ENCODE measurements at regions of chr1 and their contacts with region 1.

Region 1: DNA sequence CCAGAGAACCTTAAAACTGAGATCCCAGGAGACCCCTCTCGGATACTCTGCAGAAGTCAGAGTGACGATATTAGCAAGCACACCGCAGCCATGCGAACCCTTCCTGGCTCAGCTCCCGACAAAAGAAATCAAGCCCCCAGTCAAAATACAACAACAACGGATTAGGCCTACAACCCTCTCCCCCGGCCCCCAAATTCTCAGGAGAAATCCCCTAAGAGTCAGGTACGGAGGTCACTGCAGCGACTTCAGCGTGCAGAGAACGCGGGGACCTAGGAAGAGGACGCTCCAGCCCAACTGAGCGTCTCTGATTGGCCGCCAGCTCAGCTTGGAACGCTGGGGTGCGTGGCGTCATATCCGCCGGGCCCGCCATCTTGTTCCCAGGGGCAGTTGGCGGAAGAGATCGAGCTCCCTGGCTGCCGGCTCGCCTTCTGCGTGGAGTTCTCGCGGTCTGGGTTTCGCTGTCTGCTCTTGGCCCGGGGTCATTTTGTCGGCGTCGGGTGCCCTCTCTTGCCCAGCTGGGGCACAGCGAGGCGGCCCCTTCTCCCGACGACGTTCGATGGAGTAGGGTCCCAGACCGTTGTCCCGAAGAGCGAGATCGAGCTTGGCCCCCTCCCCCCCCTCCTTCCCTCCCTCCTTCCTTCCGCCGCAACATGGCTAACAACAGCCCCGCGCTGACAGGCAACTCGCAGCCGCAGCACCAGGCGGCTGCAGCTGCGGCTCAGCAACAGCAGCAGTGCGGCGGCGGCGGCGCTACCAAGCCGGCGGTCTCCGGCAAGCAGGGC is at the start of gene PRPF38B:
- DNase-seq: peak; percentile 91
- ATAC-seq: peak; percentile 89
- H3K4me3 Mint-ChIP-seq: peak within 1 kb of the TSS; percentile 99
- H3K27ac Mint-ChIP-seq: peak within 1 kb of the TSS; percentile 98
- H3K4me1 Mint-ChIP-seq: peaks cover 46% of the 10 kb centered on the region
- H3K27me3 Mint-ChIP-seq: no peaks in the 10 kb centered on the region
- CTCF ChIP-seq: no peak
- total RNA-seq, gene PRPF38B: 77.3 and 88.1 TPM in 2 replicates

Region 2: DNA sequence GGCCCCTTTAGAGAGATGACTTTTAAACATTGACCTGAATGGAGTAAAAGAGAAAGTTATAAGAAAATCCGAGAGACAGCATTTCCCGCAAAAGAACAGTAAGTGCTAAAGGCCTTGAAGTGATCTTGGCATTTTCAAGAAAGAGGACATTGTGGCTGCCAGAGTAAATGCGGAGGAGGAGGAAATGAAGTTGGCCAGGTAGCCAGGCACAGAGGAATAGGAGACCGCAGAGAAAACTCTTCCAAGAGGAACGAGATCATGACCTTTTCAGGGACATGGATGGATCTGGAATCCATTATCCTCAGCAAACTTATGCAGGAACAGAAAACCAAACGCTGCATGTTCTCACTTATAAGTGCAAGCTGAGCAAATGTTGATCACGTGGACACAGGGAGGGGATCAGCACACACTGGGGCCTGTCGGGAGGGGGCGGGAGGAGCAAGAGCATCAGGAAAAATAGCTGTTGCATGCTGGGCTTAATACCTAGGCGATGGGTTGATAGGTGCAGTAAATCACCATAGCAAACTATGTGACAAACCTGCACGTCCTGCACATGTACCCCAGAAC is 82.6 kb before region 1 on chr1:
- CTCF ChIA-PET with region 1: no interaction called
- POLR2A ChIA-PET with region 1: interaction called, 10 read pairs
- intact Hi-C with region 1: no loop called
- DNase-seq: no peak
- ATAC-seq: no peak
- H3K4me3 Mint-ChIP-seq: no peak overlapping the region
- H3K27ac Mint-ChIP-seq: no peak overlapping the region
- H3K4me1 Mint-ChIP-seq: no peaks in the 10 kb centered on the region
- H3K27me3 Mint-ChIP-seq: no peaks in the 10 kb centered on the region
- CTCF ChIP-seq: no peak

Region 3: DNA sequence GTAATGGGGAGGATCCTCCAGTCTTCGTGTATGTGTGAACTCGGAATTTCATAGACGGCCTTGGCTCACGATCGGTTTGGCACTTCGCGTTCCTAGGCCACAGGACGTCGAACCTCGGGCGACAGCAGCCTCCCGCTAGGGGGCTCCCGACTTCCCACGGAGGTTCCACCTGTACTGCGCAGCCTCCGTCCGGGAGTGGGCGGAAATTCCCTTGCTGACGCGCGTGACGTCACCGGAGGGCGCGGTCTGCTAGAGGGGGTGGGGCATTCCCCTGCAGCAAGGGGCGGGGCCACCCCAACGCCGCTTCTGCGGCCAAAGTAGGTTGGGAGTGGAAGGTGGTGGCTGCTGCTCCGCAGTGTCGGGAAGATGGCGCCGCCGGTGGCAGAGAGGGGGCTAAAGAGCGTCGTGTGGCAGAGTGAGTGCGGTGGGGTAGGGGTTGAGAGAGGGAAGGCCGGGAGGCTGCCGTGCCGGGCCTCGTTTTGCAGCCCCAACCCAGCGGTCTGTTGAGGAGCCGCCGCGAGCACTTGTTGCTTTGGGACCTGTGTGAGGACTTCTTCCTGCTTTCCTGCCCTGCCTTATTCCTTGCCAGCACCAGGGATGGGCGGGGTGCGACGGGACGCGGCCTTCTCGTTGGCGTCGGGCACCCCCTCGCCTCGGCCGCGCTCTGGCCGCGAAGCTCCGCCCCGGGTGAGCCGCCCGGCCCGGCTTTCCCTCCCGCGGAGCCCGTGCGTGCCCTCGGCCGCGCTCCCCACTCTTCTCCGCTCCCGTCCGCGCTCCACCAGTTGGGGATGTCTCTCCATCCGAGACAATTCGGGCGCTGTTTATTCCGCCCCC is 54.5 kb after region 1 on chr1 and contains the start of gene STXBP3:
- CTCF ChIA-PET with region 1: no interaction called
- POLR2A ChIA-PET with region 1: interaction called, 17 read pairs
- intact Hi-C with region 1: loop called (anchors 1 kb)
- DNase-seq: peak; percentile 99
- ATAC-seq: peak; percentile 92
- H3K4me3 Mint-ChIP-seq: peak within 1 kb of the TSS; percentile 99
- H3K27ac Mint-ChIP-seq: peak within 1 kb of the TSS; percentile 99
- H3K4me1 Mint-ChIP-seq: peaks cover 28% of the 10 kb centered on the region
- H3K27me3 Mint-ChIP-seq: no peaks in the 10 kb centered on the region
- CTCF ChIP-seq: peak; percentile 93
- total RNA-seq, gene STXBP3: 46.4 and 50.2 TPM in 2 replicates

Region 4: DNA sequence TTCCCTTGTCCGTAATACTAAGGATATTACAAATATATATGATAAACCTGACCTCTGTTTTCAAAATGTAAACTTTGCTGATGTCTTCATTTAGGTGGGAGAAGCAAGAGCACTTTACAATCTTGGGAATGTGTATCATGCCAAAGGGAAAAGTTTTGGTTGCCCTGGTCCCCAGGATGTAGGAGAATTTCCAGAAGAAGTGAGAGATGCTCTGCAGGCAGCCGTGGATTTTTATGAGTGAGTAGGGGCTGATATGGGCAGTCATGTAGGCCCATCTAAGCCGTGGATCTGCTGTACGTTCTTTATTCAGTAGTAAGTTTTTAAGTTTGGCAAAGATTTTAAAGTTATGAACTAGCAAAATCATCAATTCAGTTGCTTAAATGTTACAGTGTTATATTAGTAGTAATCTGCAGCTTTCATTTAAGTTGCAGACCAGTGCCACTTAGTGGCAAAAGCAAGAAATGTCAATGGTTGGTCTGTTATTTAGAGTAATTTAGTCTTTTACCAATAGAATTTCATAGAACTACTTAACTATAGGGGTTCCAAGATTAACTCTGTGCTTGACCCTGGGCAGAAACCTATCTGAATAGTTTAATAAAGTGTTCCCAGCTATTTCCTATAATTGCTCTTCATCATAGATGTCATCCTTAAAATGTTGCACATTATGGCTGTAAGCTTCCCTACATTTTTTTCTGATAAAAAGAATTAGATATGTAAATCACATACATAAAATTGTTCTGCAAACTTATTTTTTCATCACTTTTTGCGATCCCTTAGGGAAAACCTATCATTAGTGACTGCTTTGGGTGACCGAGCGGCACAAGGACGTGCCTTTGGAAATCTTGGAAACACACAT is 206.0 kb after region 1 on chr1:
- CTCF ChIA-PET with region 1: interaction called, 6 read pairs
- POLR2A ChIA-PET with region 1: interaction called, 4 read pairs
- intact Hi-C with region 1: loop called (anchors 1 kb)
- DNase-seq: no peak
- ATAC-seq: peak; percentile 66
- H3K4me3 Mint-ChIP-seq: no peak overlapping the region
- H3K27ac Mint-ChIP-seq: no peak overlapping the region
- H3K4me1 Mint-ChIP-seq: no peaks in the 10 kb centered on the region
- H3K27me3 Mint-ChIP-seq: no peaks in the 10 kb centered on the region
- CTCF ChIP-seq: peak; percentile 36

Region 5: DNA sequence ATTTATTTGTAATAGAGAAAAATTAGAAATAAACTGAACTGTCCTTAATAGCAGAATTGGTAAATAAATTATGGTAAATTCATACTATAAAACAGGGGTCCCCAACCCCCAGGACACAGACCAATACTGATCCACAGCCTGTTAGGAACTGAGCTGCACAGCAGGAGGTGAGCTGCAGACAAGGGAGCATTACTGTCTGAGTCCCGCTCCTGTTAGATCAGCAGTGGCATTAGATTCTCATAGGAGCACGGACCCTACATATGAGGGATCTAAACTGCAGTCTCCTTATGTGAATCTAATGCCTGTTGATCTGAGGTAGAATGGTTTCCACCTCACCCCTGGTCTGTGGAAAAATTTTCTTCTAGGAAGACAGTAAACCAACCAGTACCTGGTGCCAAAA is 342.2 kb after region 1 on chr1:
- CTCF ChIA-PET with region 1: no interaction called
- POLR2A ChIA-PET with region 1: no interaction called
- intact Hi-C with region 1: no loop called
- DNase-seq: no peak
- ATAC-seq: no peak
- H3K4me3 Mint-ChIP-seq: no peak overlapping the region
- H3K27ac Mint-ChIP-seq: no peak overlapping the region
- H3K4me1 Mint-ChIP-seq: no peaks in the 10 kb centered on the region
- H3K27me3 Mint-ChIP-seq: no peaks in the 10 kb centered on the region
- CTCF ChIP-seq: no peak

Region 6: GRCh38 chr1:109075531-109076490 is 383.7 kb after region 1 on chr1 and contains the start of gene TAF13:
- CTCF ChIA-PET with region 1: no interaction called
- POLR2A ChIA-PET with region 1: interaction called, 3 read pairs
- intact Hi-C with region 1: loop called (anchors 2 kb)
- DNase-seq: peak; percentile 92
- ATAC-seq: peak; percentile 99
- H3K4me3 Mint-ChIP-seq: peak within 1 kb of the TSS; percentile 97
- H3K27ac Mint-ChIP-seq: peak within 1 kb of the TSS; percentile 96
- H3K4me1 Mint-ChIP-seq: peaks cover 25% of the 10 kb centered on the region
- H3K27me3 Mint-ChIP-seq: no peaks in the 10 kb centered on the region
- CTCF ChIP-seq: no peak
- total RNA-seq, gene TAF13: 18.5 and 21.2 TPM in 2 replicates

Region 7: DNA sequence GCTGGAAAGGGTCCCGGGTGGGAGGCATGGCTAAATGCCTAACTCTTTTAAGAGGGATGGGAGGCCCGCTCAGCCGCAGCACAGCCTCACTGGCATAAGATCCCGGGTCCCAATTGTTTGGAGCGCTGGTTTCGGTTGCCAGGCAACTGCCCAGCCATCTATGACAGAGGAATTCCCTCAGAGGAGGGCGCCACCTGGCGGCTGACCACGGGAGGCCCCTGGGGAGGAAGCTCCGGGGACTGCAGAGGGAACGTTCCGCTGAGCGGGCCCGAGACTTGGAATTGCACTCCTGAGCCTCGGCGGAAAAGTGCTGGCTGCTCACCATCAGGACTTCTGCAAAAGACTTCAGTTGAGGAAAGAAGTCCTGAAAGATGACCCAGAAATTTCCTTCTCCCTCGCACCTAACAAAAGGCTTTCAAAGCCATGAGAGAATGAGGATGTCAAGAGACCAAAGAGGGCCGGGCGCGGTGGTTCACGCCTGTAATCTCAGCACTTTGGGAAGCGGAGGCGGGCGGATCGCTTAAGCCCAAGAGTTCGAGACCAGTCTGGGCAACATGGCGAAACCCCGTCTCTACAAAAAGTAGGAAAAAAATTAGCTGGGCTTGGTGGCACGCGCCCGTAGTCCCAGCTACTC is 420.6 kb after region 1 on chr1:
- CTCF ChIA-PET with region 1: no interaction called
- POLR2A ChIA-PET with region 1: interaction called, 6 read pairs
- intact Hi-C with region 1: loop called (anchors 5 kb)
- DNase-seq: peak; percentile 83
- ATAC-seq: peak; percentile 75
- H3K4me3 Mint-ChIP-seq: peak overlapping the region; percentile 77
- H3K27ac Mint-ChIP-seq: peak overlapping the region; percentile 56
- H3K4me1 Mint-ChIP-seq: peaks cover 25% of the 10 kb centered on the region
- H3K27me3 Mint-ChIP-seq: peaks cover 27% of the 10 kb centered on the region
- CTCF ChIP-seq: peak; percentile 88

Measured in activated B cell treated with CpG ODN at 0.5 μM for 24 hours (primary cell).